Right cardiac atrium (tissue), 5 donors: ENCODE measurements at regions of chr20 and their contacts with region 1.

Region 1: DNA sequence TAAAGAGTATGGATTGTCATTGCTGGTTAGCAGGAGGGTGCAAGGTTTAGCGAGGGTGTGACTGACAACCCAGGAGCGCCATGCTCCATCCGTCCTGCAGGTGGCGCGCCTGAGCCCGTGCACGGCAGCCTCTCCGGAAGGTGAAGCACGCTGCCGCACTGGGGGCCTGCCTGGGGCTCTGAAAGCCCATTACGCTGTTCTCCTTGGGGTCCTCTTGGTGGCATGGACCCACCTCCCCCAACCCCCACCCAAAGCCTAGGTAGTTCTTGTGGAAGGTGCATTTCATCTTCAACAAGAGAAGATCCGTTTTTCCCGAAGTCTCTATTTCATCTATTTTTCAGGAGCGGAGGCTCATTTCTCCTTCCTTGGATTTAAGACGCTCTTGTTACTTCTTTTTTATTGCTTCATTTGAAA is 197.4 kb upstream of the KCNG1 start:
- DNase-seq: peak; percentile 34 to 68 (median 65)
- ATAC-seq: peak in 1 of 2 donors; percentile 38
- H3K4me3 ChIP-seq: no peak overlapping the region
- H3K27ac ChIP-seq: no peak overlapping the region
- H3K4me1 ChIP-seq: no peaks in the 10 kb centered on the region
- H3K27me3 ChIP-seq: no peaks in the 10 kb centered on the region

Region 2: DNA sequence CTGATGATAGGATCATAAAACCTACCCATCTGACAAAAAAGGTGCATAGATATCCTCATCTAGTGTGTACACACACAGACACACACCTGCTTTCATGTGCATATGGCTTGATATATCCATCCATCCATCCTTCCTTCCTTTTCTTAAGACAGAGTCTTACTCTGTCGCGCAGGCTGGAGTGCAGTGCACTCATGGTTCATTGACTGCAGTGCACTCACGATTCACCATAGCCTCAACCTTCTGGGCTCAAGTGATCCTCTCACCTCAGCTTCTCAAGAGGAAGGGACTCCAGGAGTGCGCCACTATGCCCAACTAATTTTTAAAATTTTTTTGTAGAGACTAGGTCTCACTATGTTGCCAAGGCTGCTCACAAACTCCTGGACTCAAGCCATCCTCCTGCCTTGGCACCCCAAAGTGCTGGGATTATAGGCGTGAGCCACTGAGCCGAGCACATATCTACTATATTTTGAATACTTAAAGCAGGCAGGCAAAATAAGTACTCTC is 316.2 kb before region 1 on chr20:
- intact Hi-C with region 1: no loop called
- DNase-seq: peak in 1 of 3 donors; percentile 55
- ATAC-seq: peak; percentile 48 to 50
- H3K4me3 ChIP-seq: no peak overlapping the region
- H3K27ac ChIP-seq: no peak overlapping the region
- H3K4me1 ChIP-seq: peaks cover 4% of the 10 kb centered on the region
- H3K27me3 ChIP-seq: no peaks in the 10 kb centered on the region

Region 3: DNA sequence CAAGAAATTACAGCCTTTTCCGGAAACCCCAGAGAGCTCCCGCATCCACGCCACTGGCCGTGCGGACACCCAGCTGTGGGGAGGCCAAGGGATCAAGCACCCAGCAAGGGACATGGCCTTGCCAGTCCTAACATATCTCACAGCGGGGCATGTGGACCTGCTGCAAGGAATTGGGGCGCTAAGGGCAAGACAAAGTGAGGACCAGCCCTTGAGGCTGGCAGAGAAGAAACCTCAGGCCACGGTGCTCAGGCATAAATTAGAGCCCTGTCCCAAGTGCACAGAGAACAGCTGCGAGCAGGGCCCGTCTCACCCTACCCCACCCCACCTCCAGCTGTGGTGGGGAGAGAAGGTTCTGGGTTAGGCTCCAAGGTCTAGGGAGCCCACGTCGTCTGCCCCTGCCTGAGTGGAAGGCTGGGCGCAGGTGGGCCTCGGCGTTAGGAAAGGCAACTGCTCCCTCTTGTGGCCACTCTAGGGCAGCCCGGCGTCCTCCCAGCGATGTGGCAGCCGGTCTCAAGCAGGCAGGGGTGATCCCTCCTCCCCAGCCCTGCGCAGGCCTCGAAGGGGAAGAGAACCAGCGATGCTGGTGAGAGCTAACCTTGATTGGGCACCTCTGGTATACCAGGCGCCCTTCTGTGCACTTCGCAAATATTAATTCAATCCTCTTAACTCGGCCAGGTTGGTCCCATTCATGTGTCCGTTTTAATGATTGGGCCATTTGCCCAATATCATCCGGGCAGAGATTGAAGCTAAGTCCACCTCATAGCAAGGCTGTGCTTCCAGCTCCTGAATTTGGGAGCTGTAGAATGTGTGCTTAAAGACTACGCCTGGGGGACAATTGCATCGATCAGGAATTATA is 86.4 kb after region 1 on chr20:
- intact Hi-C with region 1: loop called in 2 of 4 experiments (anchors 5 to 10 kb)
- DNase-seq: peak; percentile 69 to 90 (median 89)
- ATAC-seq: peak; percentile 89 to 94
- H3K4me3 ChIP-seq: no peak overlapping the region
- H3K27ac ChIP-seq: no peak overlapping the region
- H3K4me1 ChIP-seq: no peaks in the 10 kb centered on the region
- H3K27me3 ChIP-seq: no peaks in the 10 kb centered on the region

Region 4: DNA sequence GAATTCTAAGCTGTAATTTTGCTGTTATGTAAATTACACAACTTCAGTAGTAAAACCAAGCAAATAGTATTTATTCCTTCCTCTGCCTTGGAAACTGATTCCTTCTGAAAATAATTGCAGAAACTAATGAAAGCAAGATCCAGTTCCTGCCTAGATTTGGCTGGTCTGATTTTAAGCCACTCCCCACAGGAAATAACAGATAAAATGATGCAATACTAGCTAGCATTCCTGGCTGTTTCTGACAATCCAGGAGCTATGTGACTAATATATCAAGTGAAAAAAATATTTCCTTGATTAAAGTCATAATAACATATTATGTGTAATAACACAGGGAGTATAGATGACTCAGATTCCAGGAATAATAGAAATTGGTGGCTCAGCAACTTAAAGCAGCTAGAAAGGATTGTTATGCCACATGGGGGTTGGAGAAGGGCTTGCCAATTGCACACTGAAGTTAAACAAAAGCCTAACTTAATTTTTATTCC is 764.7 kb after region 1 on chr20:
- intact Hi-C with region 1: no loop called
- DNase-seq: no peak
- ATAC-seq: peak; percentile 91 to 92
- H3K4me3 ChIP-seq: no peak overlapping the region
- H3K27ac ChIP-seq: no peak overlapping the region
- H3K4me1 ChIP-seq: no peaks in the 10 kb centered on the region
- H3K27me3 ChIP-seq: no peaks in the 10 kb centered on the region